Activated T-helper 1 cell treated with anti-CD3 and anti-CD28 coated beads, Interleukin-12 subunit alpha, Interleukin-12 subunit beta, Interleukin-2, Interleukin-4 antibody, amounts not matched to agents 30 ng/mL and 10 ng/mL and 1 ng/mL, durations not matched to agents 14 hours and 24 hours and 36 hours (primary cell): ENCODE measurements at regions of chr6 and their contacts with region 1.

Region 1: DNA sequence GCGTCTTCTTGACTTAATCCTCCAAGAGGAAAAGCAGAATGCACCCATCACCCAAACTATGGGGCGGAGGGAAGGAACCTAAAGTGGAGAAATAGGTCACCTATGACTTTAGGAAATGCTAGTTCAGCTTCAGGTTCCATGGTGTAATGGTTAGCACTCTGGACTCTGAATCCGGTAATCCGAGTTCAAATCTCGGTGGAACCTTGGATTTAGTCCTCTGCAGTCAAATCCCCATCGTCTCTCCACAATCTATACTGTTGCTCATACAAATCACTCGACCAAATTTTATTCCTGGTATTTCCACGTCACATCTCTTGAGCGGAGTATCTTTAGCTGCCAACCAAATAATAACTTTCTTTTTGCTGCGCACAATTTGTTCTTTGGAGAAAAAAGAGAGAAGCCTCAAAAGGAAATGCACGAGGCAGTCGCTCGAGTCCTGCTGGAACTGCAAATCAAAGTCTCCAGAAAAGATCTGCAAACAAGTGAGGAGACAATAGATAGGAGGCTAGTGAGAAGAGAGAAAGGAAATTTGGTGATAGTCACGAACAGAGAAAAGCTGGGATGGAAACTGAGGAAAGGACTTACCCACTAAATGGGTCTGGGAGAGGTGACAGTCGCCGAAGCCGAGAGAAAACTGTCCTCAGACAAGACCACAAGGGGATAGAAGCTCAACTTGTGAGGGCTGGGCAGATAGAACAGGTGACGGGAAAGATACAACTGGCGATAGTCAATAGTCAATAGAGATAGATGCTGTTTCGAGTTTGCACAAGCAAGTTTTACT is 16.6 kb downstream of the POM121L2 start:
- DNase-seq: no peak
- H3K4me3 Mint-ChIP-seq: no peak overlapping the region
- H3K27ac Mint-ChIP-seq: peak overlapping the region; percentile 32
- H3K4me1 Mint-ChIP-seq: no peaks in the 10 kb centered on the region
- H3K27me3 Mint-ChIP-seq: peaks cover 54% of the 10 kb centered on the region

Region 2: GRCh38 chr6:27601668-27602254 is 306.3 kb after region 1 on chr6:
- intact Hi-C with region 1: loop called (anchors 5 kb)
- DNase-seq: no peak
- H3K4me3 Mint-ChIP-seq: peak overlapping the region; percentile 70
- H3K27ac Mint-ChIP-seq: peak overlapping the region; percentile 59
- H3K4me1 Mint-ChIP-seq: peaks cover 29% of the 10 kb centered on the region
- H3K27me3 Mint-ChIP-seq: peaks cover 24% of the 10 kb centered on the region

Region 3: DNA sequence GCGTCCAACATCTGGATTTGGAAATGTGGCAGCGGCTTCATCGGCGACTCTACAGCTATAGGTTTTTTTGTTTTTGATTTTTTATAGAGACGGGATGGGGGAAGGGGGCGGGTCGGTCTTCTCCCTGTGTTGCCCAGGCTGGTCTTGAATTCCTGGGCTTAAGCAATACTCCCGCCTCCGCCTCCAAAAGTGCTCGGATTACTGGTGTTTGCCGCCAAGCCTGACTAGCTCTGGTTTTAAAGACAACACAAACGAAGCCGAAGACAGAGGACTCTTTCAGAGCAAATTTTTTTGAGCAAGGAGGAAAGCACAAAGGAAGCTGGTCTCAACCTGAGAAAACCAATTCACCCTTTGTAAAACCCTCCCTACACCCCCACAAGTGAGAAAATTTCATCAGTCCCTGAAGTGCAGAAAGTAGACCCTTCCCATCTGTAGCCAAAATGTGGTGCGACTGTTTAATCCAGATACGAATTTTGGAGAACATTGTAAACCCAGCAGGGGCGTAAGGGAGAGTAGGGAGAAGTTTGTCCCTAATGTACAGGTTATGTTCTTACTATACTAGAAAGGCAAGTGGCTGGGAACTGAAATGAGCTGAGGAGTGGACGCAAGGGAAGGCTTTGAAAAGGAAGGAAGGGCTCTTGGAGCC is 1442.4 kb after region 1 on chr6:
- intact Hi-C with region 1: loop called (anchors 5 kb)
- DNase-seq: no peak
- H3K4me3 Mint-ChIP-seq: peak overlapping the region; percentile 12
- H3K27ac Mint-ChIP-seq: peak overlapping the region; percentile 54
- H3K4me1 Mint-ChIP-seq: peaks cover 10% of the 10 kb centered on the region
- H3K27me3 Mint-ChIP-seq: peaks cover 72% of the 10 kb centered on the region

Region 4: DNA sequence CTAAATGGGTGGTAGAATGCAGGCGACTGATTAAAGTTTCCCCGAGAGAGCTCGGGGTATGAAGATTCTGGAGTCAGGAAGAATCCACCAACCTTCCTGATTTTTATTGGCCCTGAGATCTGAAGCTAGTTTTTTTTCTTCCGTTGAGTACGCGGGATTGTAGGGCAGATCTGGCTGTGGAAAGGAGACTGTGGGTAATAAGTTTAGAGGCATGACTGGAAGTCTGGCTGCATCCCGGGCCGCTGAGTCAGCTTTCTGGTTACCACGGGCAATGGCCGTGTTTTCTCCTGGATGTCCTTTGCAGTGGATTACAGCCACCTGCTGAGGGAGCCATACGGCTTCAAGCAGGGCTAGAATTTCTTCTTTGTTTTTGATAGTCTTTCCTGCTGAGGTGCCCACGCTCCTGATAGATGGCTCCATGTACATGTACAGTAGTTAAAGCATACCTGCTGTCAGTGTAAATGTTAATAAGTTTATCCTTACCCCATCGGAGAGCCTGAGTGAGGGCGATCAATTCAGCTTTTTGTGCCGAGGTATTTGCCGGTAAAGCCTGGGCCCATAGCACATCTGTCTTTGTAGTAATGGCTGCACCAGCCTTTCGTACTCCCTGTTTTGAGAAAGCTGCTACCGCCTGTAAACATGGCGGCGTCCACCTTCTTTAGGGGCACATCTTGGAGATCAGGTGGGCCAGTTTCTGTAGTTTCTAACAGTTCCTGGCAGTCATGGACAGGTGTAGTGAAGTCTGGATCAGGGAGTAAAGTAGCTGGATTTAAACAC is 1474.3 kb after region 1 on chr6:
- intact Hi-C with region 1: loop called (anchors 5 kb)
- DNase-seq: no peak
- H3K4me3 Mint-ChIP-seq: no peak overlapping the region
- H3K27ac Mint-ChIP-seq: no peak overlapping the region
- H3K4me1 Mint-ChIP-seq: peaks cover 9% of the 10 kb centered on the region
- H3K27me3 Mint-ChIP-seq: peaks cover 92% of the 10 kb centered on the region